Naive thymus-derived CD4-positive, alpha-beta T cell (primary cell): ENCODE measurements at regions of chr13 and their contacts with region 1.

Region 1: DNA sequence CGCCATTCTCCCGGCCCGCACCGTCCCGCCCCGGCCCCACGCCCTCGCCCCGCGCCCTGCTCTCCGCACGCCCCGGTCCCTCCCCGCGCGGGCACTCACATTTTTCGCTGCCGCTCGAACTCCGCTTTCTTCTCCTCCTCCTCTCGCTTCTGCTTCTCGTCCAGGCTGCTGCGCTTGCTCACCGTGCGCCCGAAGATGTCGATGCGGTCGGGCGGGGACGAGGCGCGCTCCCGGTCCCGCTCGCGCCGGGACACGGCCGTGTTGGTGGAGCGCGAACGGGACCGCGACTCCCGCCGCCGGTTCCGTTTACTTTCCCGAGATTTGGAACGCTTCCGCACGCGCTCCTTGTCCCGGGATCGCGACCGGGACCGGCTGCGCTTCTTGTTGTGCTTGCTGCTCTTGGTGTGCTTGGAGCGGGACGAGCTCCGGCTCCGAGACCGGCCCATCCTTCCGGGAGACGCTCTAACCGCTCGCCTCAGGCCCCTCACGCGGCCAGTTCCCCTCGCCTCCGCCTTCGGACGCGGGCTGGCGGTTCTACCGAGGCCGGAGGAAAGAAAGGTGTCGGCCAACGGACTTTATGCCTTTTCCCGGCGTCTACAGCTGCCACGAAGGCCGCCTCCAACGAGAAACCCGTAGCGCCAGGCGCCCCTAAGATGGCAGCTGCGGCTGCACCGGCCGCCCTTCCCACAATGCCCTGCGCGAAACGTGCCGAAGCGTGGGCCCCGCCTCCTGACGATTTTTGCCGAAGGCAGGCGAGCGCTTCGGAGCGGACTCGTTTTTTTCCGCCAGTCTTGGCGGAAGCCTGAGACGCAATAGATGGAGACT is at the start of gene ARGLU1:
- DNase-seq: peak; percentile 88 to 98 (median 97)
- ATAC-seq: peak; percentile 92
- H3K4me3 ChIP-seq: peak within 1 kb of the TSS; percentile 70
- H3K4me3 Mint-ChIP-seq: peak within 1 kb of the TSS; percentile 83 to 100 (median 98)
- H3K27ac ChIP-seq: peak within 1 kb of the TSS; percentile 95
- H3K27ac Mint-ChIP-seq: peak within 1 kb of the TSS; percentile 90 to 97 (median 95)
- H3K4me1 ChIP-seq: peaks cover 34 to 35% of the 10 kb centered on the region in 2 donors
- H3K4me1 Mint-ChIP-seq: peaks cover 39 to 66% (median 53%) of the 10 kb centered on the region in 7 donors
- H3K27me3 ChIP-seq: no peaks in the 10 kb centered on the region
- H3K27me3 Mint-ChIP-seq: no peaks in the 10 kb centered on the region
- total RNA-seq, gene ARGLU1: 93.3 to 291 (median 160) TPM

Region 2: GRCh38 chr13:105139380-105140285 is 1428.1 kb before region 1 on chr13:
- CTCF ChIA-PET with region 1: no interaction called
- POLR2A ChIA-PET with region 1: interaction called, 5 read pairs
- intact Hi-C with region 1: loop called (anchors 1 to 10 kb)
- DNase-seq: peak; percentile 16 to 76 (median 66)
- ATAC-seq: peak; percentile 93
- H3K4me3 ChIP-seq: peak overlapping the region; percentile 63
- H3K4me3 Mint-ChIP-seq: peak overlapping the region; percentile 85 to 98 (median 94)
- H3K27ac ChIP-seq: peak overlapping the region; percentile 74
- H3K27ac Mint-ChIP-seq: peak overlapping the region; percentile 94 to 99 (median 96)
- H3K4me1 ChIP-seq: peaks cover 0 to 5% of the 10 kb centered on the region in 2 donors
- H3K4me1 Mint-ChIP-seq: peaks cover 5 to 22% (median 17%) of the 10 kb centered on the region in 7 donors
- H3K27me3 ChIP-seq: no peaks in the 10 kb centered on the region
- H3K27me3 Mint-ChIP-seq: peaks cover 0 to 5% (median 0%) of the 10 kb centered on the region in 5 donors

Region 3: DNA sequence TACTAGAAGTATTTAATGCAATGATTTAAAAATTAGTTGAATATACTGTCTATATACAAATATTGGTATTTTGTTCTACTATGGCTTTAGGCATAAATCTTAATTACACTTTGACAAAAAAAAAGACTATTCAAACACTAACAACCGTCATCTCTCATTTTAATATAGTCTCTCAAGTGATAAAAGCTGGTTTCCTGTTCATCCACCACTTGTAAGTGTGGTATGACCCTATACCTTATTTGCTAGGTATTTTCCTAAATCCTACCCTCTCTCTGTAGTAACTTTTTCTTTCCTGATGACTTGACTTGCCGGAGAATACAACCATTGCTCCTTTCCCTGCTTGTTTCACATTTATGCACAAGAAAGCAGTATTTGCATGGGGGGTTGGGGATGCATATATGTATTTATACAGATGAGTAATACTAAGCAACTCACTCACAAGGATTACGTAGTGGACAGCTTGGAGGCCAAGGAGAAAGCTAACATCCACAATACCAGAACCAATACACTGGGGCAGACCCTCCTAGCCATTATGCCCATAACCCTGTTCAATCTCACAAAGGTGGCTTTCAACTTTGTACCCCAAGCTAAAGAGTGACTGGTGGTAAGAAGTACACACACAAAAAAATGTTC is 19.5 kb before region 1 on chr13:
- CTCF ChIA-PET with region 1: no interaction called
- POLR2A ChIA-PET with region 1: no interaction called
- intact Hi-C with region 1: loop called (anchors 2 kb)
- DNase-seq: no peak
- ATAC-seq: peak; percentile 14
- H3K4me3 ChIP-seq: no peak overlapping the region
- H3K4me3 Mint-ChIP-seq: no peak overlapping the region
- H3K27ac ChIP-seq: no peak overlapping the region
- H3K27ac Mint-ChIP-seq: peak overlapping the region in 2 of 9 donors; percentile 22 to 37
- H3K4me1 ChIP-seq: no peaks in the 10 kb centered on the region
- H3K4me1 Mint-ChIP-seq: peaks cover 16 to 42% (median 32%) of the 10 kb centered on the region in 7 donors
- H3K27me3 ChIP-seq: no peaks in the 10 kb centered on the region
- H3K27me3 Mint-ChIP-seq: no peaks in the 10 kb centered on the region

Region 4: DNA sequence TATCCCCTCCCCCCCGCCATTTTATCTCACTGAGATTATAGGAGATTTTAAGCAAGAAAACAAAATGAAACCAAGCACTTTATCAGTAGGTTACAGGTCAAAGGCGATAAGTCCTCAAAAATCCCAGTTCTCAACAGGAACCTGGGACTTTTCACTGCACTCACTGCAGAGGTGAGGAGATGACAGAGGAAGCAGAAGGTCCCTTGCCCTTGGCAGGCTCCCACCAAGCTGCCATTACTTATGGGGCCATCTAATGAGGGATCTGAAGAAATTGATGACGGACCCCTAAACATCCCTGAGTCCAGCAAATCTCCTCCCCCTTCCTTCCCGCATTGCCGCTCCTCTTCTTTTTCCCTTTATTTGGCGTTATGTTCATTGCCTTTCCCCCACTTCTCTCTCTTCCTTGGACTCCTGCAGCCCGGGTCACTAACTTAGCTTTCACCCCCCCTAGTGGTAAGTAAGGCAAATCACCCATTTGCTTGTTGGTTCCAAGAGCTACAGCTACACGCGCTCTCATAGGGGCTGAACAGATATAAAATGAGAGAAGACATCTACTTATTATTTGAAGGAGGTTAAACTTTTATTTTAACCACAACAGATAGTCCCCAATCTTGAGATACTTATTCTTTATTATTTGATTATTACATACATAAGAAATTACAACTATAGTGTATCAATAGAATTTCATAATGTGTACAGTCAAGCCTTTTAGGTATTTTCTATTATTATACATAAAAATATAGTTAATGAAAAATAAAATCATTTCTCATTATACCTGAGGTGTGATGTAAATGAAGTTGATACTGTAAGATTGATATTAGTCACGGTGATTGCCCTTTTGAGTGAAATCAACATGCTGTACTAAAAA is 52.2 kb after region 1 on chr13:
- CTCF ChIA-PET with region 1: interaction called, 4 read pairs
- POLR2A ChIA-PET with region 1: no interaction called
- intact Hi-C with region 1: loop called in 1 of 2 experiments (anchors 1 kb)
- DNase-seq: peak in 7 of 9 donors; percentile 12 to 52 (median 40)
- ATAC-seq: peak; percentile 82
- H3K4me3 ChIP-seq: no peak overlapping the region
- H3K4me3 Mint-ChIP-seq: peak overlapping the region in 4 of 10 donors; percentile 0 to 42 (median 6)
- H3K27ac ChIP-seq: no peak overlapping the region
- H3K27ac Mint-ChIP-seq: no peak overlapping the region
- H3K4me1 ChIP-seq: no peaks in the 10 kb centered on the region
- H3K4me1 Mint-ChIP-seq: peaks cover 0 to 6% (median 5%) of the 10 kb centered on the region in 7 donors
- H3K27me3 ChIP-seq: no peaks in the 10 kb centered on the region
- H3K27me3 Mint-ChIP-seq: peaks cover 21 to 37% (median 23%) of the 10 kb centered on the region in 5 donors

Region 5: DNA sequence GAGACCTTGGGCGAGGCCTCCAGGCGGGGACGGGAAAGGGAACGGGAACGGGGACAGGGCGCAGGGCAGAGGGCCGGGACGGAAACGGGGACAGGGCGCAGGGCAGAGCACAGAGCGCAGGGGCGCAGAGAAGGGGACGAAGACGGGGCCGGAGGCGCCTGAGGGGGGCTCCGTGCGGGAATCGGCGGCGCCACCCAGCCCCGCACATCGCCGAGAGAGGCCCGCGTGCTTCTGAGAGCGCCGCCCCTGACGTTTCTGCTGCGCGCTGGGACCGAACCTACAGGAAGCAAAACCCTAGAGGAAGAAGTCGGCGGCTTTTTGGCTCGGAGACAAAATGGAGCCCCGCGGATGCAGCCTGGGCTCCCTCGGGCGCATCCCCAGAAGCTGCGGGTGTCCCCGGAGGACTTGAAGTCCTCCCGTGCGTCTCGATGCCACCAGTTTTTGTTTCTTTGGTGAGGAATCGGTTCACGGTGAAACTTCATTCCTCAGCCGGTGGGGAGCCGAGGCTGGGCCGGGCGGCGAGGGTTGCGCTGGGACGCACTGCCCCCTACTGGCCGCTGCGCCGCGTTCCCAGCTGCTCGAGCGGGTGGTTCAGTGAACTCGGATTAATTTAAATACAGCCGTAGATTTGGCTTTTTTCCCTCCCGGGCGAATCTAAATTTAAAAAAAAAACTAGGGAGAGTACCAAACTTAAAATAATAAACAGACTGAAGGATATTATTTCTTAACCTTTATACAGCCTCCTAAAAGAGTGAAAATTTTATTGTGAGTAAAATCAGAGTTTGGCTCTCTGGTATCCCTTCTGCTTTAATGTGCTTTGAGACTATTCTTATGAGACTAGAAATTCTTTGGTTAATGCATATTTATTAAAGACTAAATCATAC is 350.2 kb after region 1 on chr13:
- CTCF ChIA-PET with region 1: no interaction called
- POLR2A ChIA-PET with region 1: no interaction called
- intact Hi-C with region 1: loop called (anchors 5 to 10 kb)
- DNase-seq: peak; percentile 29 to 79 (median 61)
- ATAC-seq: peak; percentile 91
- H3K4me3 ChIP-seq: peak overlapping the region; percentile 73
- H3K4me3 Mint-ChIP-seq: peak overlapping the region; percentile 68 to 86 (median 77)
- H3K27ac ChIP-seq: no peak overlapping the region
- H3K27ac Mint-ChIP-seq: peak overlapping the region in 5 of 9 donors; percentile 31 to 67 (median 55)
- H3K4me1 ChIP-seq: peaks cover 0 to 6% of the 10 kb centered on the region in 2 donors
- H3K4me1 Mint-ChIP-seq: peaks cover 0 to 21% (median 8%) of the 10 kb centered on the region in 7 donors
- H3K27me3 ChIP-seq: no peaks in the 10 kb centered on the region
- H3K27me3 Mint-ChIP-seq: peaks cover 25 to 37% (median 36%) of the 10 kb centered on the region in 5 donors

Region 6: GRCh38 chr13:107069108-107069786 is 501.6 kb after region 1 on chr13:
- CTCF ChIA-PET with region 1: no interaction called
- POLR2A ChIA-PET with region 1: no interaction called
- intact Hi-C with region 1: no loop called
- DNase-seq: no peak
- ATAC-seq: no peak
- H3K4me3 ChIP-seq: no peak overlapping the region
- H3K4me3 Mint-ChIP-seq: no peak overlapping the region
- H3K27ac ChIP-seq: no peak overlapping the region
- H3K27ac Mint-ChIP-seq: no peak overlapping the region
- H3K4me1 ChIP-seq: no peaks in the 10 kb centered on the region
- H3K4me1 Mint-ChIP-seq: no peaks in the 10 kb centered on the region
- H3K27me3 ChIP-seq: no peaks in the 10 kb centered on the region
- H3K27me3 Mint-ChIP-seq: no peaks in the 10 kb centered on the region

Region 7: DNA sequence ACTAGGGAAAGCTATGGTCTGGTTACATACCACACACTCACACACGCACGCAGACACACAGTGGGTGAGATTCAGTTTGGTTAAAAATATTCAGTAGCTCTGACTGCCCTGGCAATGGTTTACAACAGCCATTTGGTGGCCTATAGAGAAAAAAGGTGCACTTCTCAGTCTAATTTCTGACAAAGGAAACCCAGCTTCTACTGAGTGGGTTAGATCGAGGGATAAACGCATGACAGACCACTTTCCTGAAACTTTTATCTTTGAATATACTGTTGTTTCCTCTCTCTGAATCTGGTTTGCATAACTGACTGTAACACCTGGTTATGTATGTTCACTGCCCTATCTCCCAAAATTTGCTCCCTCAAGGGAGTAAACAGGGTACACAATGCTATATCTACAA is 1645.2 kb after region 1 on chr13:
- CTCF ChIA-PET with region 1: no interaction called
- POLR2A ChIA-PET with region 1: no interaction called
- intact Hi-C with region 1: loop called in 1 of 2 experiments (anchors 1 kb)
- DNase-seq: no peak
- ATAC-seq: no peak
- H3K4me3 ChIP-seq: no peak overlapping the region
- H3K4me3 Mint-ChIP-seq: peak overlapping the region in 2 of 10 donors; percentile 1 to 3
- H3K27ac ChIP-seq: no peak overlapping the region
- H3K27ac Mint-ChIP-seq: peak overlapping the region in 3 of 9 donors; percentile 0 to 26 (median 23)
- H3K4me1 ChIP-seq: peaks cover 19 to 30% of the 10 kb centered on the region in 2 donors
- H3K4me1 Mint-ChIP-seq: peaks cover 7 to 47% (median 35%) of the 10 kb centered on the region in 7 donors
- H3K27me3 ChIP-seq: no peaks in the 10 kb centered on the region
- H3K27me3 Mint-ChIP-seq: no peaks in the 10 kb centered on the region

Region 8: GRCh38 chr13:108218044-108218974 is 1650.6 kb after region 1 on chr13 and contains the start of gene ABHD13:
- CTCF ChIA-PET with region 1: no interaction called
- POLR2A ChIA-PET with region 1: no interaction called
- intact Hi-C with region 1: loop called in 1 of 2 experiments (anchors 1 kb)
- DNase-seq: peak; percentile 88 to 98 (median 93)
- ATAC-seq: peak; percentile 81
- H3K4me3 ChIP-seq: peak within 1 kb of the TSS; percentile 98
- H3K4me3 Mint-ChIP-seq: peak within 1 kb of the TSS; percentile 92 to 98 (median 96)
- H3K27ac ChIP-seq: peak within 1 kb of the TSS; percentile 79
- H3K27ac Mint-ChIP-seq: peak within 1 kb of the TSS; percentile 95 to 98 (median 96)
- H3K4me1 ChIP-seq: peaks cover 34 to 50% of the 10 kb centered on the region in 2 donors
- H3K4me1 Mint-ChIP-seq: peaks cover 16 to 77% (median 72%) of the 10 kb centered on the region in 7 donors
- H3K27me3 ChIP-seq: no peaks in the 10 kb centered on the region
- H3K27me3 Mint-ChIP-seq: peaks cover 0 to 4% (median 0%) of the 10 kb centered on the region in 5 donors
- total RNA-seq, gene ABHD13: 10.3 to 19.8 (median 12.7) TPM